IMR-90 (cell line): ENCODE measurements at regions of chr2 and their contacts with region 1.

Region 1: DNA sequence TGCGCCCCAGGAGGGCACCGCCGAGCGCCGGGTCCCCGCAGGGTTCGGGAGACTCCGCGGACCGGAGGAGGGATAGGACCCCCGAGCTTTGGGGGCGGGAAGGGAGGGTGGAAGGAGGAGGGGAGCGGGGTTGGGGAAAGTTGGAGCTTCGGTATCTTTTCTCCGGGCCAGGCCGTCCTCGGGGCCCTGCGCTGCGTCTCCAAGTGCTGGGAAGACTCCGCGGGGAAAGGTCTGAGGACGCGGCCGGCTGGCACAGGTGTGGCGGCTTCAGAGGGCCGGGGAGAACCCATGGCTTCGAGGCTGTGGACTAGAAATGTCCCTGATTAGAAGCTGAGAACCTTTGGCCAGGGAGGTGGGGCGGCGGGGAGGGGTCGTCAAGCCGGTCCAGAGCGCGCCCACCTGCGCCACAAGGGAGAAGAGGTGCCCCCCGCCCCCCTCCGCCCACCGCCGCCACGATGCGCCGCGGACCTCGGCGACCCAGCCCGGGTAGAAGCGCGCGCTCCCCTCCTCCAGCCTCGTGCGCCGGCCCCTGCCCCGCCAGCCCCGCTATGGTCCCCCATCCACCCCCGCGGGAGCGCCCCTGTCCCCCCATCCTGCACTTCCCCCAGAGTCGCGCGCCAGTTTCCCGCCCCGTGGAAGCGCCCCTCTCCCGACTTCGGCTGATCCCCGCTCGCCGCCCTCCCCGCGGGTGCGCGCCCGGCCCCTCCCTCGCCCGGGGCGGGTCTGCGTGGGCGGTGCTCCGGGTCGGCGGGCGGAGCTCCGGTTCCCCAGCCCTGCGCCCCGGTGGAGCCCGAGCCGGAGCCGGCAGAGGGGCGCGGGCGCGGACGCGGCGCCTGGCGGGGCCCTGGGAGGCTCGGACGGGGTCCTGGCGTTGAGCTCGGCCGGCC is at the start of gene SNTG2:
- DNase-seq: no peak
- ATAC-seq: peak; percentile 87
- H3K4me3 ChIP-seq: peak within 1 kb of the TSS; percentile 46
- H3K27ac ChIP-seq: no peak within 1 kb of the TSS
- H3K4me1 ChIP-seq: no peaks in the 10 kb centered on the region
- H3K27me3 ChIP-seq: peaks cover 28% of the 10 kb centered on the region
- CTCF ChIP-seq: no peak
- POLR2A ChIP-seq: no peak
- RAD21 ChIP-seq: no peak
- total RNA-seq, gene SNTG2: under 0.01 and 0.56 TPM in 2 replicates

Region 2: GRCh38 chr2:714005-714741 is 236.2 kb before region 1 on chr2:
- CTCF ChIA-PET with region 1: no interaction called
- POLR2A ChIA-PET with region 1: no interaction called
- dilution Hi-C with region 1: no loop called
- in situ Hi-C with region 1: no loop called
- intact Hi-C with region 1: loop called (anchors 10 kb)
- DNase-seq: peak; percentile 54
- ATAC-seq: peak; percentile 74; the same call in 1 of the 2 replicates
- H3K4me3 ChIP-seq: no peak overlapping the region
- H3K27ac ChIP-seq: no peak overlapping the region
- H3K4me1 ChIP-seq: no peaks in the 10 kb centered on the region
- H3K27me3 ChIP-seq: peaks cover 2% of the 10 kb centered on the region; the same call in 1 of the 2 replicates
- CTCF ChIP-seq: peak; percentile 66
- POLR2A ChIP-seq: no peak
- RAD21 ChIP-seq: peak; percentile 70

Region 3: GRCh38 chr2:860259-860855 is 90.0 kb before region 1 on chr2:
- CTCF ChIA-PET with region 1: no interaction called
- POLR2A ChIA-PET with region 1: no interaction called
- dilution Hi-C with region 1: no loop called
- in situ Hi-C with region 1: no loop called
- intact Hi-C with region 1: no loop called
- DNase-seq: no peak
- ATAC-seq: no peak
- H3K4me3 ChIP-seq: no peak overlapping the region
- H3K27ac ChIP-seq: no peak overlapping the region
- H3K4me1 ChIP-seq: no peaks in the 10 kb centered on the region
- H3K27me3 ChIP-seq: no peaks in the 10 kb centered on the region
- CTCF ChIP-seq: no peak
- POLR2A ChIP-seq: no peak
- RAD21 ChIP-seq: no peak

Region 4: DNA sequence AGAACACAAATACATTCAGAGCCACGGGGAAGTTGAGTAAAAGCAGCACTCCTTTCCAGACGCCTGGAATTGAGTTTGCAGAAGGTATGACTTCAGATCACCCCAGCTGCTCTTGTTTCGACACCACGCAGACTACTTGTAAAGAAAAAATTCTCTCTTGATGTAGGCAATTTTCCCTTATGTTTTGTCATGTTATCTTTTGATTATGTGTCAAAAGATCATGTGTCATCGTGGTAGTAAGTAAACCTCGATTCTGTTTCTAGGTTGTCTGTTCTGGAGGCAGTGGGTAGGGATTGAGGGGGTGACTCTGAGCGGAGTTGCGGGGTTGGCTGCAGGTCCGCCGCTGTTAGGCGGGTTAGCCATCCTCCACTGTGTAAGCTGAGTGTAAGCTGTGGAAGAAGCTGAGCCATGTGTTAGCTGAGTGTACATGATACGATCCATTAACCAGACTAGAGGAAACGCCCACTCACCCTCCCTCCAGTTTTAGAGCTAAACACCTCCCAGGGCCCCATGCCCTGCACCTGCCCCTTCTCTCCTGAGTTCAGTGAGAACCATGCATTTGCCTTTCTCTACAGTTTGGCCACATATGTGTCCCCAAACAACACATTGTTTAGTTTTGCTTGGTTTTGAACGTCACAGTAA is 182.1 kb after region 1 on chr2:
- CTCF ChIA-PET with region 1: interaction called, 4 read pairs
- POLR2A ChIA-PET with region 1: no interaction called
- dilution Hi-C with region 1: no loop called
- in situ Hi-C with region 1: no loop called
- intact Hi-C with region 1: loop called (anchors 5 kb)
- DNase-seq: no peak
- ATAC-seq: no peak
- H3K4me3 ChIP-seq: no peak overlapping the region
- H3K27ac ChIP-seq: no peak overlapping the region
- H3K4me1 ChIP-seq: no peaks in the 10 kb centered on the region
- H3K27me3 ChIP-seq: no peaks in the 10 kb centered on the region
- CTCF ChIP-seq: no peak
- POLR2A ChIP-seq: no peak
- RAD21 ChIP-seq: no peak

Region 5: DNA sequence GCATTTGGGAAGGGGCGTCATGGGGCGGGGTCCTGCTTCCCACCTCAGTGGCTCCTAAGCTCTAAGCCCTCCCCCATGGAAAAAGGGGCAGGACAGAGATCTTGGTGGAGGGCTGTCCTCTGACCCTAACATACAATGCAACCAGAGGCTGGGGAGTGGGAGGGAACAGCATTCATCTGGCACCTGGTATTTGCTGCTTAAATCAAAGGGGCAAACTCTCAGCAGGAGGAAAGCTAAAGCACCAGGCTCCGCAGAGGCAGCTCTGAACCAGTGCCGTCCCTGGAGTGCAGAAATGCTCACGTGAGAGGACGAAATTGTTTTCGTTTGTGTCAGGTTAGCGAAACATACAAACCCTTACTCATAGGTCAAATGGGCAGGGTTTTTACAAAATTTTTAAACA is 886.7 kb after region 1 on chr2:
- CTCF ChIA-PET with region 1: no interaction called
- POLR2A ChIA-PET with region 1: no interaction called
- dilution Hi-C with region 1: no loop called
- in situ Hi-C with region 1: loop called (anchors 25 kb)
- intact Hi-C with region 1: no loop called
- DNase-seq: no peak
- ATAC-seq: peak; percentile 49; the same call in 1 of the 2 replicates
- H3K4me3 ChIP-seq: no peak overlapping the region
- H3K27ac ChIP-seq: no peak overlapping the region
- H3K4me1 ChIP-seq: no peaks in the 10 kb centered on the region; the same call in 1 of the 2 replicates
- H3K27me3 ChIP-seq: peaks cover 3% of the 10 kb centered on the region; the same call in 1 of the 2 replicates
- CTCF ChIP-seq: no peak
- POLR2A ChIP-seq: no peak
- RAD21 ChIP-seq: no peak